ENCODE measurements at regions of chr12 and their contacts with region 1.

Region 1: GRCh38 chr12:47896633-47897032 is 8.2 kb downstream of the VDR start:
- DNase-seq: no peak
- ATAC-seq: no peak
- H3K4me3 ChIP-seq: no peak overlapping the region
- H3K4me3 Mint-ChIP-seq: no peak overlapping the region
- H3K27ac ChIP-seq: no peak overlapping the region
- H3K27ac Mint-ChIP-seq: no peak overlapping the region
- H3K4me1 ChIP-seq: peaks cover 42% of the 10 kb centered on the region
- H3K4me1 Mint-ChIP-seq: peaks cover 31% of the 10 kb centered on the region
- H3K27me3 ChIP-seq: no peaks in the 10 kb centered on the region
- H3K27me3 Mint-ChIP-seq: no peaks in the 10 kb centered on the region
- CTCF ChIP-seq: no peak

Region 2: DNA sequence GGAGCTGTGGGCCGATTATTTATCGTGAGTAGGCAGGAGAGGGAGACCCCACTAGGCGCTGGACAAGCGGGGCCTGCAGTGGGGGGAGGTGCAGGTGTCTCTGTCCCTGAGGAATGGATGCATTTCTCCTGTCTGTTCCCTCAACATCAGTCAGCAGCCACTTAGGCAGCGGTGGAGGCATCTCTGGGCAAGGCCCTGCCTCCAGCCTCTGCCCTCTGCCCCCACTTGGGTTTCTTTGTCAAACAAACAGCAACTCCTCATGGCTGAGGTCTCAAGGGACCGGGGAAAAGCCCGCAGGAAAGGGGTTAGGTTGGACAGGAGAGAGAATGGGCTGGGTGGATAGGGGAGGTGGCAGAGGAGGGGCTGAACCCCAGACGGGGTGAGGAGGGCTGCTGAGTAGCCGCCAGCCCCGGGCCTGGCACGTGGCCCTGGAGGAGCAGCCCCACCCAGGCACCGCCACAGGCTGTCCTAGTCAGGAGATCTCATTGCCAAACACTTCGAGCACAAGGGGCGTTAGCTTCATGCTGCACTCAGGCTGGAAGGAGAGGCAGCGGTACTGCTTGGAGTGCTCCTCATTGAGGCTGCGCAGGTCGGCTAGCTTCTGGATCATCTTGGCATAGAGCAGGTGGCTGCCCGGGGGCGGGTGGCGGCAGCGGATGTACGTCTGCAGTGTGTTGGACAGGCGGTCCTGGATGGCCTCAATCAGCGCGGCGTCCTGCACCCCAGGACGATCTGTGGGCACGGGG is 52.2 kb before region 1 on chr12:
- CTCF ChIA-PET with region 1: no interaction called
- POLR2A ChIA-PET with region 1: no interaction called
- intact Hi-C with region 1: loop called in 1 of 2 experiments (anchors 5 kb)
- DNase-seq: no peak
- ATAC-seq: no peak
- H3K4me3 ChIP-seq: no peak overlapping the region
- H3K4me3 Mint-ChIP-seq: no peak overlapping the region
- H3K27ac ChIP-seq: no peak overlapping the region
- H3K27ac Mint-ChIP-seq: no peak overlapping the region
- H3K4me1 ChIP-seq: no peaks in the 10 kb centered on the region
- H3K4me1 Mint-ChIP-seq: no peaks in the 10 kb centered on the region
- H3K27me3 ChIP-seq: no peaks in the 10 kb centered on the region
- H3K27me3 Mint-ChIP-seq: no peaks in the 10 kb centered on the region
- CTCF ChIP-seq: no peak

Region 3: GRCh38 chr12:47920913-47921312 is 24.3 kb after region 1 on chr12:
- CTCF ChIA-PET with region 1: no interaction called
- POLR2A ChIA-PET with region 1: no interaction called
- intact Hi-C with region 1: no loop called
- DNase-seq: no peak
- ATAC-seq: no peak
- H3K4me3 ChIP-seq: no peak overlapping the region
- H3K4me3 Mint-ChIP-seq: no peak overlapping the region
- H3K27ac ChIP-seq: no peak overlapping the region
- H3K27ac Mint-ChIP-seq: no peak overlapping the region
- H3K4me1 ChIP-seq: no peaks in the 10 kb centered on the region
- H3K4me1 Mint-ChIP-seq: no peaks in the 10 kb centered on the region
- H3K27me3 ChIP-seq: no peaks in the 10 kb centered on the region
- H3K27me3 Mint-ChIP-seq: no peaks in the 10 kb centered on the region
- CTCF ChIP-seq: no peak